ENCODE measurements at regions of chr5 and their contacts with region 1.

Region 1: DNA sequence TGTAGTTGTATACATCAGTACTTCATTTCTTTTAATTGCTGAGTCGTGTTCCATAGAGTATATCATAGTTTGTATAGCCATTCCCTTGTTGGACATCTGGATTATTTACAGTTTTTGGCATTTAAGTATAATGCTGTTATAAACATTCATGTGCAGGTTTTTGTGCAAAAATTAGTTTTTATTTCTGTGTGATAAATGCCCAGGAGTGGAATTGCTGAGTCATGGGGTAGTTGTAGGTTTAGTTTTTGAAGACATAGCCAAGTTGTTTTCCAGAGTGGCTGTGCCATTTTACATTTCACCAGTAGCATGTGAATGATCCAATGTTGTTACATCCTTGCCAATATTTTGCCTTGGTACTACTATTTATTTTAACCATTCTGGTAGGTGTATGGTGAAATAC is 12.5 kb downstream of the ZNF354B start:
- DNase-seq: no peak
- ATAC-seq: no peak
- H3K4me3 ChIP-seq: no peak overlapping the region
- H3K27ac ChIP-seq: no peak overlapping the region
- H3K4me1 ChIP-seq: no peaks in the 10 kb centered on the region
- H3K27me3 ChIP-seq: no peaks in the 10 kb centered on the region
- CTCF ChIP-seq: no peak

Region 2: DNA sequence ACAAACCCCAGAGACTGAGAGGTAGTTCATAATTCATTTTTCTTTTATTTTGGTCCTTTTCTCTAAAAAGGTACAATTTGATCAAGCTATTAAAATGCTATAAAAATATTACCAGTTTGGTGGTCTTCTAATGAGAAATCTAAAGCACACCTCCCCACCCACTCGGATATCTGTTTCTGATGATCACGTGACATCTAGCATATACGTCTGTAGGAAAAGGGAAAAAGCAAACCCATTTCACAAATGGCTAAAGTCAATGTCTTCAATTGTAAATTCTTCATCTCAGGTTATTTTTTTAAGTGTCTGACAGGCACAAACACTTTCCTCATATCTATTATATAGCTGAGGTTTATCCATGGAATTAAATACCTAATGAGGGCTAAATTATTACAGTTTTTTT is 160.7 kb before region 1 on chr5:
- intact Hi-C with region 1: loop called in 1 of 2 experiments (anchors 10 kb)
- DNase-seq: no peak
- ATAC-seq: no peak
- H3K4me3 ChIP-seq: no peak overlapping the region
- H3K27ac ChIP-seq: no peak overlapping the region
- H3K4me1 ChIP-seq: no peaks in the 10 kb centered on the region
- H3K27me3 ChIP-seq: no peaks in the 10 kb centered on the region
- CTCF ChIP-seq: no peak